ENCODE measurements at regions of chr2 and their contacts with region 1.

Region 1: GRCh38 chr2:231104115-231104713 is 20.6 kb downstream of the HTR2B start:
- H3K4me3 ChIP-seq: no peak overlapping the region
- H3K27ac ChIP-seq: no peak overlapping the region
- H3K4me1 ChIP-seq: no peaks in the 10 kb centered on the region
- CTCF ChIP-seq: no peak

Region 2: DNA sequence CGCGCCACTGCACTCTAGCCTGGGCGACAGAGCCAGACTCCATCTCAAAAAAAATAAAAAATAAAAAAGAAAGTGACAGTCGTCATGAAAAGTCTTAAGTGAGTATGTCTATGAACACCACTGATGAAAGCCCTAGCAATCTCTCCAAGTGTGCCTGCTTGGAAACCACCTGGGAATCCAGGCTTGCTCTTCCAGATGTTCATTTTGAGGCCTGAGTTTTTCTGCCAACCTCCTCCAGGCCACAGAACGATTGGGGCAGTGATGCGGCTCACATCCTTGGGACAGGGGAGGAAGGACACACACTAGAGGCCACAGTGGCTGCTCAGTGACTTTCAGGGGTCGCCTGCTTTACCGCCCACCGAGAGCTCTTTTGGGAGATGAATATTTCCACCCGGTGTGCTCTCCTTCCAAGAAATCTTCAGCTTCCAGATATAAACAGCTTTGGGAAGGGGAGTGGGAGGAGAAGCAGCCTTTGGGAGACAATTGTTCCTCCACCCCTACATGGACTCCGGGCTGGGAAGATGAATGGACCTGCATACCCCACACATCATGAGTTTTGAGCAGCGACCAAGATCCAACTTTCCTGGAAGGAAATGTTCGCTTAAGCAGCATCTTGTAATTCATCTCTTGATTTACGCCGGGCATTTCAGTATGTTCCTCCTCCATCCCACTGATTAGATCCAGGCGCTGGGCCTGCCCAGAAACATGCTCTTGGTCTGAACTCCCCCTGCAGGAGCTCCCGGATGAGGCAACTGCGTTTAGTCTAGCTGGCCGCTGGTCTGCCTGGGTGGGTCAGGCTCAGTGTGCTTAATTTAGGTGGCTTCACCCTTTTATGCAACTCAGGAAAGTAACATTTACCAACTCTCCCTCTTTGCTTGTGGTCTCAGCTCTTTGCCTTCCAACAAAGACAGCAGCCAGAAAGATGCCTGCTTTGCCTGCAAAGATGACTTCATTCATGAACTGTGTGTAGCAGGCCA is 88.0 kb after region 1 on chr2:
- CTCF ChIA-PET with region 1: interaction called, 49 read pairs
- POLR2A ChIA-PET with region 1: no interaction called
- H3K4me3 ChIP-seq: no peak overlapping the region
- H3K27ac ChIP-seq: no peak overlapping the region
- H3K4me1 ChIP-seq: no peaks in the 10 kb centered on the region
- CTCF ChIP-seq: peak; percentile 63

Region 3: DNA sequence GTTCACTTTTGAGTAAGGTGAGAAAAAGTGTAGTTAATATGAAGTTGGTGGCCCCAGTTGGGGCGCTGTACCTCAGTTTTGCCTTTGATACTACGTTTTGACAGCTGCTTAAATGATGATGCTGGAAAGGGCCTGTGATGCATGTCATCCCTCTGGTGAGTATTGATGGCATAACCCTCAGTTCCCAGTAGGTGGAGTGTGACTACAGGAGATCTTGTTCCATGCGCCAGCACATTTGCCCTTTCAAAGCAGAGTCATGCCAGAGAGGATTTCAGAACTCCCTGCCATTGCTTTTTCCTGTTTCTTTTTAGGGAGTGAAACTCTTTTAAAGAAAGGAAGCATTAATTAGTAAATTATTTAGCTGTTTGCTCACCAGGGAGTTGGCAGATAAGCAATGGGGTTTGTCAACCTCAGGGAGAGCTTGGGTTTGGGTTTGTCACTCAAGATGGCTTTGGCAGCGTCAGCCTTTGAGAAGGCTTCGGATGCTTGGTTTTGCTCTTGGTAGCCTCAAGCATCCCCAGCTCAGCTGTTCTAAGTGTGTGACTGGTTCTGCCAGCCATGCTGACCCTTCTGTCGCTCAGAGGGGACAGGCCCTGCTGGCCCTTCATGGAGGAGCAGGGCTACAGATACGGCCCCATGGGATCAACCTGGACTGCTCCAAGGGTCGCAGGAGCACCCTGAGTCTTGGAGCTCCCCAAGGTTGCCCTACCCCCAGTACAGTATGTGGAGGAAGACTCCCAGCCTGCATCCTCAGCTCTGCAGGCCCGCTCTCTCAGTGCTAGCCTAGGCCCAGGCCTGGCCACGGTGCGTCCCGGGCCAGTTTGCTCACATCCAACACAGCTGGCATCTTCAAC is 123.3 kb after region 1 on chr2:
- CTCF ChIA-PET with region 1: interaction called, 18 read pairs
- POLR2A ChIA-PET with region 1: no interaction called
- H3K4me3 ChIP-seq: no peak overlapping the region
- H3K27ac ChIP-seq: no peak overlapping the region
- H3K4me1 ChIP-seq: peaks cover 6% of the 10 kb centered on the region; the same call in 1 of the 2 replicates
- CTCF ChIP-seq: peak; percentile 70

Region 4: DNA sequence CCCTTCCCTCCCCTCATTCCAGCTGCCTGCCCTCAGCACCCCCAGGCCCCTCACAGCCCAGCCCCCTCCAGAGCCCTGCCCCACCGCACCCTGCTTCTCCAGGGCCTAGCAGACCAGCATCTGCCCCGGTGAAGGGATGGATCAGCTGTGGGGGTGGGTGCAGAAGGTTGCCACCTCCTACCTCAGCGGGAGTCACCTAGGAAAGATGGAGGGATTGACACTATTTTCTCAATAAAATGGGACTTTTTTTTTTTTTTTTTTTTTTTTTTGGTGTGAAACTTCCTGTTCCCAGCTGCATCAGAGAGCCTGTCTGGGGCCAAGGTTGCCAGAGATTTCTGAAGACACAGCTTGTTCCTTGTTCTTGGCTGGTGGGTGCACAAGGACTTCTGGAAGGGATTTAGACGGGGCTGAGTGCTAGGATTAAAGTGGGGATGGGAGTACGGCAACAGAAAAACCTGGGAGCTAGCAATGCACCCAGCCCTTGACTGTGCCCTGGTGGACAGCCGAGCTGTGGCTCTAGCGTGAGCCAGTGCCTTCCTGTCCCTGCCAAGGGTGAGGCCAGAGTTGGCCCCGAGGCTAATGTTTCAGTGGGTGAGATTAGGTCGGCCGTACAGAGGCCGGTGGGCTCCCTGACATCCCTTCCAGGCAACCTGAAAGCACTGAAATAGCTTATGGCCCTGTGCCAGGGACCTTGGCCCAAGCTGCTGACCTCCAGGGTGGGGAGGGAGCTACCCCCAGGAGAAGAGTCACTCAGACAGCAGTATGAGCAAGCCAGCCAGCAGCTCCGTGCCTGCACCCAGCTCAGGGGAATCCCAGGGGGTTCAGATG is 295.9 kb after region 1 on chr2:
- CTCF ChIA-PET with region 1: interaction called, 10 read pairs
- POLR2A ChIA-PET with region 1: no interaction called
- H3K4me3 ChIP-seq: no peak overlapping the region
- H3K27ac ChIP-seq: no peak overlapping the region
- H3K4me1 ChIP-seq: no peaks in the 10 kb centered on the region
- CTCF ChIP-seq: no peak

Region 5: GRCh38 chr2:231452799-231453508 is 348.7 kb after region 1 on chr2:
- CTCF ChIA-PET with region 1: interaction called, 16 read pairs
- POLR2A ChIA-PET with region 1: interaction called, 3 read pairs
- H3K4me3 ChIP-seq: no peak overlapping the region
- H3K27ac ChIP-seq: 0 out of 2 replicates have a peak overlapping the region, but pooled peaks have one; percentile 7
- H3K4me1 ChIP-seq: no peaks in the 10 kb centered on the region
- CTCF ChIP-seq: no peak